GM12878 (cell line): ENCODE measurements at regions of chr17 and their contacts with region 1.

Region 1: GRCh38 chr17:17496189-17497064 is at the start of gene RASD1:
- DNase-seq: no peak
- ATAC-seq: peak; percentile 95
- H3K4me3 ChIP-seq: peak within 1 kb of the TSS; percentile 59
- H3K27ac ChIP-seq: no peak within 1 kb of the TSS
- H3K4me1 ChIP-seq: peaks cover 4% of the 10 kb centered on the region; the same call in 1 of the 2 replicates
- H3K27me3 ChIP-seq: peaks cover 2 to 10% of the 10 kb centered on the region in 2 experiments; a peak in 3 of 4 replicates
- CTCF ChIP-seq: peak; percentile 74 to 86 (median 79); a peak in 5 of 6 replicates
- EP300 ChIP-seq: no peak
- POLR2A ChIP-seq: peak; percentile 57; the same call in 1 of the 2 replicates
- RAD21 ChIP-seq: peak; percentile 72
- polyA plus RNA-seq, gene RASD1: not detected

Region 2: GRCh38 chr17:17356149-17356930 is 140.1 kb before region 1 on chr17:
- CTCF ChIA-PET with region 1: interaction called, 6 read pairs
- POLR2A ChIA-PET with region 1: no interaction called
- RAD21 ChIA-PET with region 1: no interaction called
- SMC1A ChIA-PET with region 1: no interaction called
- in situ Hi-C with region 1: loop called (anchors 5 kb)
- intact Hi-C with region 1: loop called (anchors 2 kb)
- DNase-seq: peak; percentile 2
- ATAC-seq: peak; percentile 92
- H3K4me3 ChIP-seq: no peak overlapping the region
- H3K27ac ChIP-seq: no peak overlapping the region
- H3K4me1 ChIP-seq: no peaks in the 10 kb centered on the region
- H3K27me3 ChIP-seq: no peaks in the 10 kb centered on the region
- CTCF ChIP-seq: peak; percentile 99 to 100 (median 100)
- EP300 ChIP-seq: no peak
- POLR2A ChIP-seq: no peak
- RAD21 ChIP-seq: peak; percentile 98

Region 3: DNA sequence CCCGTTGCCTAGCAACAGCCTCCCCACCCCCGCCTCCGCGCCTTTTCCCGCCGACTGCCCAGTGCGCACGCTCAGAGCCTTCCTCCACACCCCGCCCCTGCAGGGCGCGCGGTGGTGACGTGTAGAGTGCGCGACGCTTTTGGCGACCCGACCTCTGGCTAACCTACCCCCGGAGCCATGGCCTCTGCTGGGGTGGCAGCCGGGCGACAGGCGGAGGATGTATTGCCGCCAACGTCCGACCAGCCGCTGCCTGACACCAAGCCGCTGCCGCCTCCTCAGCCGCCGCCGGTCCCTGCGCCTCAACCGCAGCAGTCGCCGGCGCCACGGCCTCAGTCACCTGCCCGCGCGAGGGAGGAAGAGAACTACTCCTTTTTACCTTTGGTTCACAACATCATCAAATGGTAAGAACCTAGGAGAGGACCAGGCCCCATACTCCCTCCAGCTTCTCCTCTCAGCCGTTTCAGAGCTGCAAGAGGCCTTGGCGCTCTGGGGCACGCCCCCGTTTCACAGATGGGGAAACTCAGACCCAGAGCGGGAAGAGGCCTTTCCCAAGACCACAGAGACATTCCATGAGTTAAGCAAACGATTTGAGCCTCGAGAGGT is 19.5 kb before region 1 on chr17 and contains the start of gene MED9:
- CTCF ChIA-PET with region 1: interaction called, 12 read pairs
- POLR2A ChIA-PET with region 1: no interaction called
- RAD21 ChIA-PET with region 1: no interaction called
- SMC1A ChIA-PET with region 1: no interaction called
- in situ Hi-C with region 1: no loop called
- intact Hi-C with region 1: loop called (anchors 1 kb)
- DNase-seq: peak; percentile 64
- ATAC-seq: peak; percentile 96
- H3K4me3 ChIP-seq: peak within 1 kb of the TSS; percentile 89
- H3K27ac ChIP-seq: peak within 1 kb of the TSS; percentile 93
- H3K4me1 ChIP-seq: no peaks in the 10 kb centered on the region; the same call in 1 of the 2 replicates
- H3K27me3 ChIP-seq: no peaks in the 10 kb centered on the region
- CTCF ChIP-seq: no peak
- EP300 ChIP-seq: no peak
- POLR2A ChIP-seq: peak; percentile 97
- RAD21 ChIP-seq: no peak
- polyA plus RNA-seq, gene MED9: 1.5 to 3.8 TPM

Region 4: GRCh38 chr17:17568749-17569195 is 72.3 kb after region 1 on chr17:
- CTCF ChIA-PET with region 1: interaction called, 13 read pairs
- POLR2A ChIA-PET with region 1: no interaction called
- RAD21 ChIA-PET with region 1: no interaction called
- SMC1A ChIA-PET with region 1: no interaction called
- in situ Hi-C with region 1: no loop called
- intact Hi-C with region 1: loop called (anchors 5 kb)
- DNase-seq: no peak
- ATAC-seq: peak; percentile 77
- H3K4me3 ChIP-seq: no peak overlapping the region
- H3K27ac ChIP-seq: no peak overlapping the region
- H3K4me1 ChIP-seq: no peaks in the 10 kb centered on the region
- H3K27me3 ChIP-seq: no peaks in the 10 kb centered on the region
- CTCF ChIP-seq: peak; percentile 59 to 76 (median 63)
- EP300 ChIP-seq: no peak
- POLR2A ChIP-seq: no peak
- RAD21 ChIP-seq: peak; percentile 38

Region 5: DNA sequence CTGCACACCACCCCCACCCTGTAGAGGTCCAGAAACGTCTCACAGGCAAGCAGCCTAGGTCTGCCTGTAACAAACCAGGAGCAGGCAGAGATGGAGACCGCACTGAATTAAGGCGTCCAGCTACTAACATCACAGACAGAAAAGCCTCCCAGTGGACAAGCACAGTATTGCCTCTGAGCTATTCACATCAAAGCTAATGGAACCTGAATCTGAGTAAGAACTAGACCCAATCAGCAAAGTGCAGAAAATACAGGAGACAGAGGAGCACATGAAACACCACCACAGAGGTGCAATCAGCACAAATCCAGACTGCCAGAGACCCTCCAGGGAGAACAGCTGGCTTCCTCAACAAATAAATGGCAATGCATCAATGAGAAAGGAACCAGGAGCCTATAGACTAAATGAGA is 117.3 kb after region 1 on chr17:
- CTCF ChIA-PET with region 1: interaction called, 18 read pairs
- POLR2A ChIA-PET with region 1: no interaction called
- RAD21 ChIA-PET with region 1: interaction called, 8 read pairs
- SMC1A ChIA-PET with region 1: interaction called, 4 read pairs
- in situ Hi-C with region 1: no loop called
- intact Hi-C with region 1: no loop called
- DNase-seq: no peak
- ATAC-seq: peak; percentile 99
- H3K4me3 ChIP-seq: no peak overlapping the region
- H3K27ac ChIP-seq: no peak overlapping the region
- H3K4me1 ChIP-seq: no peaks in the 10 kb centered on the region
- H3K27me3 ChIP-seq: no peaks in the 10 kb centered on the region
- CTCF ChIP-seq: peak; percentile 53 to 78 (median 76)
- EP300 ChIP-seq: no peak
- POLR2A ChIP-seq: no peak
- RAD21 ChIP-seq: peak; percentile 54

Region 6: DNA sequence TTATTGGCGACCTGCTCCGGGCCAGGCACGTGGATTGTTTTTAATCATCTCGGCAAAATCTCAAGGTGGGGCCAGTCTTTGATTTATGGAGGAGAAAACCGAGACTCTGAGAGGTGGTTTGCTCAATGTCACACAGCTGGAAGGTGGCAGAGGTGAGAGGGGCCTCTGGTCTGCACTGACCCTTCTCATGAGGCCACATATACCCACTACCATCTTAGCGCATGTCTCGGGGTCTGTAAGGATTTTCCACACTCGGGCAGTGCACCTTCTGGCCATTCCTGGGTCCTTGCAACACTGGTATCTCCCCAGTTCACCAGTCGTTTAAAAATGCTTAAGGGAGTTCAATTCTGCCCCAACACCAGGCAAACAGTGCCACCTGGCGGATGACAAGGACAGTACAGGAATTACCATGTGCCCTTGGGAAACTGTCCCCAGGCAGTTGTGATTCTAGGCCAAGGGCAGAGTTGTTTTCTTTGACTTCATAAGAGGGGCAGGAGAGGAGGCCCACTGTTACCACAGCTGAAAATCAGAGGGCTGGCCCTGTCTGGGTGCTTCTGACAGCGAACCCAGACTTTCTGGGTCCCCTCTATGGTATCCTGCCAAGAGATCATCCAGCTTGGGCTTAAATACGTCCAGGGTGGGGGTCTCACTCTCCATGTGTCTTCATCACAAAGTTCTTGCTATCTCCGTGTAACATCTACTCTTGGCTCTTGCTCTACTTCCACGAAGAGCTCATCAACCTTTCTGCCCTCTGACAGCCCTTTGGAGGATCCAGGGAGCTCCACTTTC is 145.4 kb after region 1 on chr17:
- CTCF ChIA-PET with region 1: interaction called, 64 read pairs
- POLR2A ChIA-PET with region 1: no interaction called
- RAD21 ChIA-PET with region 1: interaction called, 28 read pairs
- SMC1A ChIA-PET with region 1: interaction called, 24 read pairs
- in situ Hi-C with region 1: loop called (anchors 5 kb)
- intact Hi-C with region 1: loop called (anchors 1 kb)
- DNase-seq: peak; percentile 46
- ATAC-seq: peak; percentile 98
- H3K4me3 ChIP-seq: no peak overlapping the region
- H3K27ac ChIP-seq: no peak overlapping the region
- H3K4me1 ChIP-seq: no peaks in the 10 kb centered on the region
- H3K27me3 ChIP-seq: no peaks in the 10 kb centered on the region
- CTCF ChIP-seq: peak; percentile 79 to 98 (median 94); a peak in 5 of 6 replicates
- EP300 ChIP-seq: no peak
- POLR2A ChIP-seq: no peak
- RAD21 ChIP-seq: peak; percentile 99